ENCODE measurements at regions of chr12 and their contacts with region 1.

Region 1: GRCh38 chr12:110449799-110450497 is at the start of gene ARPC3:
- DNase-seq: peak; percentile 90 to 98 (median 94)
- ATAC-seq: peak; percentile 95
- H3K4me3 ChIP-seq: peak within 1 kb of the TSS; percentile 84
- H3K4me3 Mint-ChIP-seq: peak within 1 kb of the TSS; percentile 100
- H3K27ac ChIP-seq: peak within 1 kb of the TSS; percentile 92 to 94
- H3K27ac Mint-ChIP-seq: peak within 1 kb of the TSS; percentile 96
- H3K4me1 ChIP-seq: peaks cover 41% of the 10 kb centered on the region
- H3K4me1 Mint-ChIP-seq: peaks cover 47% of the 10 kb centered on the region
- H3K27me3 ChIP-seq: no peaks in the 10 kb centered on the region
- H3K27me3 Mint-ChIP-seq: no peaks in the 10 kb centered on the region
- CTCF ChIP-seq: peak; percentile 81
- total RNA-seq, gene ARPC3: 120 to 124 TPM

Region 2: DNA sequence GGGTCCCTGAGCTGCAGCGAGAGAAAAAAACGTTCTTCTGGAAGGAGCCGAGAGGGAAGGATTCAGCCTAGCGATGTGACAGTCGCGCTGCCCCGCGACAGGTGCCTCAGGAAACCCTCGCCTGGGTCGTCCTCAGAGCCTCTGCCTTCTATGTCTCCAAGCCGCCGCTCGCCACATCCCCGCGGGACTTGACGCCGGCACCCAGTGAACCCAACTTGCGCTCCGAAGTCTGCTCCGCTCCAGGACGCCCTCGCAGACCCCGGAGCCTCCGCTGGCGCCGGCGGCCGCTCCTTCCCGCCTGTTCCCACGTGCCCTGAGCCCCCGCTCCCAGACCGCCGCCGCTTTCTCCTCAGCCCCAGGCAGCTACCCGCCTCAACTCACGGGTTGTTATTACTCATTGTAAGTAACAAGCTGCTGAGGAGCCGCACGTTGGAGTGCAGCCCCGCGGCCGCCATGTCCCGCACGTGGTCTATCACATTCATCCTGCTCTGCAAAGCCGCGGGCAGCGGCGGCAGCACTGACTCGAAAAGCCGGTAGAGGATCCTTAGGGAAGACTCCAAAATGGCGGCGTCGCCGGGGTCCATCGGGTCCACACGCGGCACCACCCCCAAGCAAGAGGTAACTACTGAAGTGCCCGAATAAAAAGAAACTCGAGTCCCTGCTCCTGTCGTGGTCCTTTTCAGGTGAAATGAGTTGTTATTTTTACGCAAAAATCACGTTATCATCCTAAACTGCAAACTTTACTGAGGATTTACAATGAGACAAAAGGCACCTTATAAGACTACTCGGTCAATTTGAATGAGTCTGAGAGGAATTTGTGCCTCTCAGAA is 46.6 kb before region 1 on chr12 and contains the start of gene ANAPC7:
- CTCF ChIA-PET with region 1: interaction called, 10 read pairs
- POLR2A ChIA-PET with region 1: no interaction called
- intact Hi-C with region 1: loop called in 1 of 2 experiments (anchors 5 kb)
- DNase-seq: peak; percentile 73 to 94 (median 84)
- ATAC-seq: peak; percentile 94
- H3K4me3 ChIP-seq: peak within 1 kb of the TSS; percentile 79
- H3K4me3 Mint-ChIP-seq: peak within 1 kb of the TSS; percentile 99
- H3K27ac ChIP-seq: peak within 1 kb of the TSS; percentile 86 to 91
- H3K27ac Mint-ChIP-seq: peak within 1 kb of the TSS; percentile 98
- H3K4me1 ChIP-seq: peaks cover 26% of the 10 kb centered on the region
- H3K4me1 Mint-ChIP-seq: peaks cover 41% of the 10 kb centered on the region
- H3K27me3 ChIP-seq: no peaks in the 10 kb centered on the region
- H3K27me3 Mint-ChIP-seq: no peaks in the 10 kb centered on the region
- CTCF ChIP-seq: no peak
- total RNA-seq, gene ANAPC7: 16.4 to 18.2 TPM

Region 3: DNA sequence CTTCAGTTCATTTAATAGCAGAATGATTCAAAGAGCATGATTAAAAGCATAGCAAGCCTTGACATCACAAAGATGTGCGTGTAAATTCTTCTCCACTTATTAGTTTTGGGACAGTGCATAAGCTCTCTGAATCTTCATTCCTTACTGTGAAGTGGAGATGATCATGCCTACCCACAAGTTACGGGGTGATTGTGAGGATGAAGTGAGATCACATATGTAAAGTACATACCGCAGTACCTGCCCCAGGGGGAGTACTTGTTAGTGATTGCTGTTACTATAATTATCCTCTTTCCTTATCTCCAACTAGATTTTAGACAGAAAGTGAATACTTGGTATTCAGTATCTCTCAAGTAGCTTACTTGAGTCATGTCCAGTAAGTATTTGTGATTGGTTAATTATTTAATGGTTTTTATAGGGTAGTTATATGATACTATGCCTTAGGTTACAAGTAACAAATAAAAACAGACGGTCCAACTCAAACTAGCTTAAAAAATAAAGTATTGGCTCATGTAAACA is 58.2 kb after region 1 on chr12:
- CTCF ChIA-PET with region 1: interaction called, 48 read pairs
- POLR2A ChIA-PET with region 1: interaction called, 3 read pairs
- intact Hi-C with region 1: loop called in 1 of 2 experiments (anchors 2 kb)
- DNase-seq: no peak
- ATAC-seq: no peak
- H3K4me3 ChIP-seq: no peak overlapping the region
- H3K4me3 Mint-ChIP-seq: no peak overlapping the region
- H3K27ac ChIP-seq: no peak overlapping the region
- H3K27ac Mint-ChIP-seq: no peak overlapping the region
- H3K4me1 ChIP-seq: no peaks in the 10 kb centered on the region
- H3K4me1 Mint-ChIP-seq: no peaks in the 10 kb centered on the region
- H3K27me3 ChIP-seq: no peaks in the 10 kb centered on the region
- H3K27me3 Mint-ChIP-seq: no peaks in the 10 kb centered on the region
- CTCF ChIP-seq: no peak

Region 4: GRCh38 chr12:110555577-110556406 is 105.8 kb after region 1 on chr12:
- CTCF ChIA-PET with region 1: interaction called, 22 read pairs
- POLR2A ChIA-PET with region 1: interaction called, 3 read pairs
- intact Hi-C with region 1: loop called (anchors 2 to 5 kb)
- DNase-seq: no peak
- ATAC-seq: no peak
- H3K4me3 ChIP-seq: no peak overlapping the region
- H3K4me3 Mint-ChIP-seq: no peak overlapping the region
- H3K27ac ChIP-seq: no peak overlapping the region
- H3K27ac Mint-ChIP-seq: peak overlapping the region; percentile 25
- H3K4me1 ChIP-seq: peaks cover 35% of the 10 kb centered on the region
- H3K4me1 Mint-ChIP-seq: peaks cover 60% of the 10 kb centered on the region
- H3K27me3 ChIP-seq: no peaks in the 10 kb centered on the region
- H3K27me3 Mint-ChIP-seq: no peaks in the 10 kb centered on the region
- CTCF ChIP-seq: no peak

Region 5: GRCh38 chr12:110606253-110606611 is 156.3 kb after region 1 on chr12:
- CTCF ChIA-PET with region 1: interaction called, 60 read pairs
- POLR2A ChIA-PET with region 1: interaction called, 23 read pairs
- intact Hi-C with region 1: no loop called
- DNase-seq: no peak
- ATAC-seq: no peak
- H3K4me3 ChIP-seq: peak overlapping the region; percentile 54
- H3K4me3 Mint-ChIP-seq: peak overlapping the region; percentile 91
- H3K27ac ChIP-seq: no peak overlapping the region
- H3K27ac Mint-ChIP-seq: peak overlapping the region; percentile 92
- H3K4me1 ChIP-seq: peaks cover 12% of the 10 kb centered on the region
- H3K4me1 Mint-ChIP-seq: peaks cover 9% of the 10 kb centered on the region
- H3K27me3 ChIP-seq: no peaks in the 10 kb centered on the region
- H3K27me3 Mint-ChIP-seq: no peaks in the 10 kb centered on the region
- CTCF ChIP-seq: no peak

Region 6: GRCh38 chr12:110826592-110827200 is 376.7 kb after region 1 on chr12:
- CTCF ChIA-PET with region 1: interaction called, 4 read pairs
- POLR2A ChIA-PET with region 1: no interaction called
- intact Hi-C with region 1: loop called (anchors 1 kb)
- DNase-seq: peak; percentile 72 to 89 (median 78)
- ATAC-seq: peak; percentile 98
- H3K4me3 ChIP-seq: no peak overlapping the region
- H3K4me3 Mint-ChIP-seq: no peak overlapping the region
- H3K27ac ChIP-seq: no peak overlapping the region
- H3K27ac Mint-ChIP-seq: no peak overlapping the region
- H3K4me1 ChIP-seq: peaks cover 6% of the 10 kb centered on the region
- H3K4me1 Mint-ChIP-seq: peaks cover 7% of the 10 kb centered on the region
- H3K27me3 ChIP-seq: no peaks in the 10 kb centered on the region
- H3K27me3 Mint-ChIP-seq: peaks cover 10% of the 10 kb centered on the region
- CTCF ChIP-seq: peak; percentile 68